ENCODE measurements at regions of chr1 and their contacts with region 1.

Region 1: GRCh38 chr1:85259118-85259911 is at the start of gene C1orf52:
- DNase-seq: peak; percentile 98
- ATAC-seq: peak; percentile 99
- total RNA-seq, gene C1orf52: 17.8 TPM

Region 2: GRCh38 chr1:84944767-84945486 is 314.4 kb before region 1 on chr1:
- intact Hi-C with region 1: loop called (anchors 5 kb)
- DNase-seq: no peak
- ATAC-seq: peak; percentile 99

Region 3: DNA sequence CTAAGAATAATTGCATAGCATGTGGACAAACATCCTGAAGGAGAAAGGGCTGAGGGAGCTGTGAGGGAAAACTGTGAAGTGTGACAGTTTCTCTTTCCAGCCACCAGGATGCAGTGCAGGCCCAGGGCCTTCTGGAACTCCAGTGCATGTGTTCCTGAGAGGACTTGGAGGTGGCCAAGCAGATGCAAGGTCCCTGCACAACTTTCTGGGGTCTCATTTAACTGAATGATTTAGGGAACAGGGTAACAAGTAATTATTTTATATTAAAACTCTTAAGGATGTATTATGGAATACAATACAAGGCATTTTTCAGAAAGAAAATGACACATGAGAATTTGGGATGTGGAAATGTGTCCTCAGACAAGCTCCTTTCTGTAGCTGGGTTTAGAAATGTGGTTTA is 149.8 kb before region 1 on chr1:
- intact Hi-C with region 1: loop called (anchors 2 kb)
- DNase-seq: peak; percentile 56
- ATAC-seq: peak; percentile 96

Region 4: DNA sequence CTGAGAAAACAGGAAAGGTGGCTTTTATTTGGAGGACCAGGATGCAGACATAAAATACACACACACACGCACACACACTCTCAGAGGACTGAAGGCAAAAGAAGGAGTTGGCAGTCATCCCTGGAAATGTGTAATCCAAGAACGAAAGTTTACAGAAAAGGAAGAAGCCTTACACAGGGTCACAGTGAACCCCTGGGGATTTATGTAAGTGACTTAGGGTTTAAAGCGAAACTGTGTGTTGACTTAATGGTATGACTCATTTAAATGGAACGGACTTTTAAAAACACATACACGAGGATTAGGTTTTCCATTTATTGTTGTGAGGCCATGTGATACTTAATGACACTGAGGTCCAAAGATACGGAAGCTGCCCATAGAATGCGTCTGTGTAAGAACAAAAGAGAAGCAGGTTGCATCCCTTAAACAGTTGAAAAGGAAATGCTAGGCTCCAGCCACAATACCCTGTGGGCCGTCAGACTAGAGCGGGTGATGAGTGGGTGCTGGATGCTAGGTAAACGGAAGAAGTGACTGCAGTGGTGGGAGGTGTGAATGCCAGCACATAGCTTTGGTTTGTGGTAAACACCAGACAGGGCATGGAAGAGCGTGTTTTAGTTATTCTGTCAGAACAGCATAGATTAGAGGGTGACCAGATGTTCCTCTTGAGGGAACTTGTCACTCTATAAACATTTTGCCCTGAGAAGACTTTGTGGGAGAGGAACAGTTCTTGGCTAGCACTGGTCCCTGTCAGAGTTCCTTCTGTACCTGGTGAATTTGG is 38.7 kb after region 1 on chr1:
- intact Hi-C with region 1: no loop called
- DNase-seq: no peak
- ATAC-seq: peak; percentile 80

Region 5: GRCh38 chr1:85374160-85374559 is 114.8 kb after region 1 on chr1:
- intact Hi-C with region 1: no loop called
- DNase-seq: no peak
- ATAC-seq: peak; percentile 52

Measured in Right ventricle myocardium superior (tissue), 1 donor.